H1 (cell line): ENCODE measurements at regions of chr10 and their contacts with region 1.

Region 1: GRCh38 chr10:34037499-34037898 is 703.0 kb upstream of the NRP1 start:
- DNase-seq: no peak
- H3K4me3 ChIP-seq: no peak overlapping the region
- H3K27ac ChIP-seq: no peak overlapping the region
- H3K4me1 ChIP-seq: no peaks in the 10 kb centered on the region
- H3K27me3 ChIP-seq: no peaks in the 10 kb centered on the region
- CTCF ChIP-seq: no peak
- EP300 ChIP-seq: no peak
- POLR2A ChIP-seq: no peak
- RAD21 ChIP-seq: no peak

Region 2: DNA sequence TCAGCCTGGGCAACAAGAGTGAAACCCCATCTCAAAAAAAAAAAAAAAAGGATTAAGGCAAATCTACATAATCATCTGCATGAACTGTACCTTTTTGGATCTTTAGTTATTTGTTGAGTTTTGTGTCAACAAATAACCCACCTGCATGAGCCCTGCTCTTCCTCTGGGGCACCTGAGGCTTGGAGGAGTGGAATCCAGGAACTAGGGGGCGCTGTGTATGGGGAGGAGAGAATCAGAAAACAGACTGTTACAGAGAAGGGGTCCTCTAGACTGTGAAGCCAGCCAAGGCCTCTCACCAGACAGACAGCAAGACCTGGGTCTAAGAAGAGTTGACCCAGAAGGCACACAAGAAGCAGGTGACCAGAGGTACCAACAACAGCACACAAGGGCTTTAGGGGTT is 20.2 kb before region 1 on chr10:
- CTCF ChIA-PET with region 1: interaction called, 13 read pairs
- POLR2A ChIA-PET with region 1: no interaction called
- DNase-seq: peak; percentile 33 to 77
- H3K4me3 ChIP-seq: no peak overlapping the region
- H3K27ac ChIP-seq: no peak overlapping the region
- H3K4me1 ChIP-seq: no peaks in the 10 kb centered on the region; a peak in 1 of 7 replicates
- H3K27me3 ChIP-seq: no peaks in the 10 kb centered on the region
- CTCF ChIP-seq: peak; percentile 71 to 98 (median 85)
- EP300 ChIP-seq: no peak
- POLR2A ChIP-seq: no peak
- RAD21 ChIP-seq: peak; percentile 57 to 72

Region 3: DNA sequence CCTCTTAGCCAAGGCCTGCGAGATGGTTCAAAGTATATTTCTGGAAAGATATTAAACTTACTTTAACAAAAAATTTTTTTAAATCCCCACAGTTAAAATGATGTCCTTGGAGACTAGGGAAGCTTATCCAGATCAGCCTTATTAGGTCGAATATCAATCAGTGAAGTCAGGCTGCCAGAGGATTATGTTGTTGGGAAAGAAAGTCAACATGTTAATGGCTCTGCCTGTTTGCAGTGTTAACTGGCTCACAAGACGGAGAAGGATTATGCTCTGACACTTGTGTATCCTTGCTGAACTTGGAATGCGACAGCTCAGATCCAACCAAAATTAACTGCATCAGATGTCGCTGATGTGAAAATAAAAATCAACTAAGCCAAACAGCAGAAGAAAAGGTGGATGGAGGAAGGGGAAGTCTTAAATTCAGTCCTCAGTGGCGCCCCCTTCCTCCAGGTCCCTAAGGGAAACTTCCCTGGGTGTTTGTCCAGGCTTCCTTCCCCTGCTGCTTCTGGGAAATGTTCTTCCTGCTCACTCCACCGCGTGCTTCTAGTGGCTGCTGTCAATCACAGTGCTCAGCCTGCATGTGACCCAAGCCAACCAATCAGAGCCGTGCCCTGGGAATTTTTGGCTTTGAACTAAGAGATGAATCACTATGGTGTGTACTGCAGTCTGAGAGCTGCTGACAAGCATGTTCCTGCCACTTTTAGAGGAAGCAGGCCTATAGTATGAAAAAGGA is 12.6 kb before region 1 on chr10:
- CTCF ChIA-PET with region 1: interaction called, 11 read pairs
- POLR2A ChIA-PET with region 1: interaction called, 5 read pairs
- DNase-seq: peak in 1 of 2 experiments; percentile 62
- H3K4me3 ChIP-seq: no peak overlapping the region
- H3K27ac ChIP-seq: no peak overlapping the region
- H3K4me1 ChIP-seq: no peaks in the 10 kb centered on the region
- H3K27me3 ChIP-seq: no peaks in the 10 kb centered on the region
- CTCF ChIP-seq: peak in 2 of 3 experiments; percentile 50 to 60; a peak in 3 of 4 replicates
- EP300 ChIP-seq: no peak
- POLR2A ChIP-seq: no peak
- RAD21 ChIP-seq: peak; percentile 47 to 56

Region 4: GRCh38 chr10:34049887-34050286 is 12.4 kb after region 1 on chr10:
- CTCF ChIA-PET with region 1: no interaction called
- POLR2A ChIA-PET with region 1: no interaction called
- DNase-seq: no peak
- H3K4me3 ChIP-seq: no peak overlapping the region
- H3K27ac ChIP-seq: no peak overlapping the region
- H3K4me1 ChIP-seq: no peaks in the 10 kb centered on the region
- H3K27me3 ChIP-seq: no peaks in the 10 kb centered on the region
- CTCF ChIP-seq: no peak
- EP300 ChIP-seq: no peak
- POLR2A ChIP-seq: no peak
- RAD21 ChIP-seq: no peak